ENCODE measurements at regions of chr7 and their contacts with region 1.

Region 1: DNA sequence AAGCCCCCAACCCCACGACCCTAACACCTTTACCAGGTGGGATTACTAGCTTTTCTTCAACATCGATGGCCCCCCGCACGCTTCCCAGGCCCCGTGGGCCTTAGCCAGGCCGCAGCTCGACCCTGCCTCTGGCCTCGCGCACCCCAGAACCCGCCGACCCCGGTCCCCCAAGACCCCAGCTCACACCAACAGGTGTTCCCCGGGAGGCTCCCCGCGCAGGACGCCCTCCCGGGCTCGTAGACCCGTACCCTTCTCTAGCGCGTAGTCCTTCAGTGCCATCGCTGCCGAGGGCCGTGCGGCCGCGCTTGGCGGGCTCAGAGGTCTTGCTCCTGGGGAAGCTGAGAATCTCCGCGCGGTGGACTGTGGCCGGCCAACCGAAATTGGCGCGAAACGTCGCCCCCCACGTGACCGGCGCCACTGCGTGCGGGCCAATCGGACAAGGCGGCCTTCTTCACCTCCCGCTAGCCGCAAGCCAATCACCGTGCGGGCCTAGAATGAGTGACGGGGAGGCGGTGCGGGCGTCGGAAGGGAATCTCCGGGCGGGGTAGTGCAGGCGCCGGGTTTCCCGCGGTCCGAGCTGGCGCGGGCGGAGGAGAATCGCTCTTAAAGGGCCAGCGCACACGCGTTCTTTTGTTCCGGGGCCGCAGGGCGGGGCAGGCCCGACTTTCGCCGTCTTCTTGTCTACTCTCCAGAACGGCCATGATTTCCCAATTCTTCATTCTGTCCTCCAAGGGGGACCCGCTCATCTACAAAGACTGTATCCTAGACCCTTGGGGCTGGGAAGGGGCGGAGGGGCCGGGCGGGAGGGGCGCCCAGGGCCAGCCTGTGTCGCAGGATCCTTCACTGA is at the starts of genes AP4M1 and MCM7:
- DNase-seq: peak; percentile 90
- ATAC-seq: peak; percentile 90
- H3K4me3 ChIP-seq: peak within 1 kb of the TSS; percentile 82 to 89
- H3K27ac ChIP-seq: peak within 1 kb of the TSS; percentile 93
- H3K4me1 ChIP-seq: peaks cover 20% of the 10 kb centered on the region
- H3K27me3 ChIP-seq: no peaks in the 10 kb centered on the region
- CTCF ChIP-seq: no peak
- total RNA-seq, gene AP4M1: 42.6 TPM
- total RNA-seq, gene MCM7: 258 TPM

Region 2: GRCh38 chr7:100015232-100016209 is 85.7 kb before region 1 on chr7 and contains the start of gene ZKSCAN1:
- CTCF ChIA-PET with region 1: no interaction called
- POLR2A ChIA-PET with region 1: interaction called, 17 read pairs
- in situ Hi-C with region 1: no loop called
- intact Hi-C with region 1: no loop called
- DNase-seq: peak; percentile 69
- ATAC-seq: peak; percentile 99
- H3K4me3 ChIP-seq: peak within 1 kb of the TSS; percentile 88 to 92
- H3K27ac ChIP-seq: peak within 1 kb of the TSS; percentile 94
- H3K4me1 ChIP-seq: peaks cover 22% of the 10 kb centered on the region
- H3K27me3 ChIP-seq: no peaks in the 10 kb centered on the region
- CTCF ChIP-seq: no peak
- total RNA-seq, gene ZKSCAN1: 55.5 TPM

Region 3: GRCh38 chr7:100119701-100120467 is 18.6 kb after region 1 on chr7:
- CTCF ChIA-PET with region 1: interaction called, 5 read pairs
- POLR2A ChIA-PET with region 1: interaction called, 16 read pairs
- in situ Hi-C with region 1: no loop called
- intact Hi-C with region 1: no loop called
- DNase-seq: peak; percentile 61
- ATAC-seq: peak; percentile 85
- H3K4me3 ChIP-seq: peak overlapping the region; percentile 69 to 99
- H3K27ac ChIP-seq: peak overlapping the region; percentile 88
- H3K4me1 ChIP-seq: peaks cover 13% of the 10 kb centered on the region
- H3K27me3 ChIP-seq: no peaks in the 10 kb centered on the region
- CTCF ChIP-seq: no peak

Region 4: GRCh38 chr7:100126931-100127865 is 26.0 kb after region 1 on chr7 and contains the start of gene MBLAC1:
- CTCF ChIA-PET with region 1: interaction called, 5 read pairs
- POLR2A ChIA-PET with region 1: interaction called, 15 read pairs
- in situ Hi-C with region 1: no loop called
- intact Hi-C with region 1: no loop called
- DNase-seq: peak; percentile 75
- ATAC-seq: peak; percentile 82
- H3K4me3 ChIP-seq: peak within 1 kb of the TSS; percentile 82 to 98
- H3K27ac ChIP-seq: peak within 1 kb of the TSS; percentile 97
- H3K4me1 ChIP-seq: peaks cover 22% of the 10 kb centered on the region
- H3K27me3 ChIP-seq: no peaks in the 10 kb centered on the region
- CTCF ChIP-seq: no peak
- total RNA-seq, gene MBLAC1: 5.2 TPM

Region 5: GRCh38 chr7:100204454-100204853 is 103.2 kb after region 1 on chr7:
- CTCF ChIA-PET with region 1: no interaction called
- POLR2A ChIA-PET with region 1: interaction called, 13 read pairs
- in situ Hi-C with region 1: no loop called
- intact Hi-C with region 1: no loop called
- DNase-seq: no peak
- ATAC-seq: no peak
- H3K4me3 ChIP-seq: no peak overlapping the region
- H3K27ac ChIP-seq: no peak overlapping the region
- H3K4me1 ChIP-seq: no peaks in the 10 kb centered on the region; the same call in 1 of the 2 replicates
- H3K27me3 ChIP-seq: peaks cover 10% of the 10 kb centered on the region; the same call in 1 of the 2 replicates
- CTCF ChIP-seq: no peak

Measured in Panc1 (cell line).